ENCODE measurements at regions of chr3 and their contacts with region 1.

Region 1: DNA sequence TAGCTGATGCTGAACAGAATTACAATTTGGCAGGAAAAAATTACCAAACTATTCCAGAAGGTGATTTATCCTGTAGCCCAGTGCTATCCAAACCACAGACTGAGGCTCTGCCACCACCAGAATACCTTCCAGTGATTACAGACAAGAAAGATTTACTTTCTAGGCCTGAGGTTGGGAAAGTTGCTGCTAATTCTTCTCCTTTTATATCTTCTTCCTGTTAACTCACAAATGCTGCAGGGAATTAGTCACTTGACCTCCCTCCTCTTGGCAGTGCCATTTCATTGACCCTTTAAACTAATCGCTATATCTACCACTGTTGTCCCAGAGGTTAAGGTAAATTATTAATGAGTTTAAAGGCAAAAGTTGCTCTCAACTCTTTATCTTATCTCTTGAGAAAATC is 118.4 kb downstream of the CTNNB1 start:
- DNase-seq: peak; percentile 76
- ATAC-seq: peak; percentile 75
- H3K4me3 ChIP-seq: no peak overlapping the region
- H3K27ac ChIP-seq: peak overlapping the region; percentile 1; the same call in 1 of the 2 replicates
- H3K4me1 ChIP-seq: peaks cover 18% of the 10 kb centered on the region
- H3K27me3 ChIP-seq: no peaks in the 10 kb centered on the region
- CTCF ChIP-seq: no peak

Region 2: DNA sequence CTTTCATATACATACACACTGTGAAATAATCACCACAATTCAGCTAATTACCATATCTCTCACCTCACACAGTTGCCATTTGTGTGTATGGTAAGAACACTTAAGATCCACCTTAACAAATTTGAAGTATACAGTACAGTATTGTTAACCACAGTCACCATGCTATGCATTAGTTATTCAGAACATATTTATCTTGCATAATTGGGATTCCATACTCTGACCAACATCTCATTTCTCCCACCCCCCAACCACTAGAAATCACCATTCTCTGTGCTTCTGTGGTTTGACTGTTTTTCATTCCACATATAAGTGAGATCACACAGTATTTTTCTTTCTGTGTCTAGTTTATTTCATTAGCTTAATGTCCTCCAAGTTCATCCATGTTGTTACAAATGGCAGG is 366.1 kb before region 1 on chr3:
- CTCF ChIA-PET with region 1: no interaction called
- POLR2A ChIA-PET with region 1: no interaction called
- intact Hi-C with region 1: no loop called
- DNase-seq: no peak
- ATAC-seq: no peak
- H3K4me3 ChIP-seq: no peak overlapping the region
- H3K27ac ChIP-seq: no peak overlapping the region
- H3K4me1 ChIP-seq: no peaks in the 10 kb centered on the region
- H3K27me3 ChIP-seq: no peaks in the 10 kb centered on the region
- CTCF ChIP-seq: no peak

Region 3: GRCh38 chr3:41247055-41248004 is 70.4 kb before region 1 on chr3:
- CTCF ChIA-PET with region 1: no interaction called
- POLR2A ChIA-PET with region 1: no interaction called
- intact Hi-C with region 1: no loop called
- DNase-seq: no peak
- ATAC-seq: no peak
- H3K4me3 ChIP-seq: no peak overlapping the region
- H3K27ac ChIP-seq: no peak overlapping the region
- H3K4me1 ChIP-seq: no peaks in the 10 kb centered on the region
- H3K27me3 ChIP-seq: no peaks in the 10 kb centered on the region
- CTCF ChIP-seq: no peak

Region 4: DNA sequence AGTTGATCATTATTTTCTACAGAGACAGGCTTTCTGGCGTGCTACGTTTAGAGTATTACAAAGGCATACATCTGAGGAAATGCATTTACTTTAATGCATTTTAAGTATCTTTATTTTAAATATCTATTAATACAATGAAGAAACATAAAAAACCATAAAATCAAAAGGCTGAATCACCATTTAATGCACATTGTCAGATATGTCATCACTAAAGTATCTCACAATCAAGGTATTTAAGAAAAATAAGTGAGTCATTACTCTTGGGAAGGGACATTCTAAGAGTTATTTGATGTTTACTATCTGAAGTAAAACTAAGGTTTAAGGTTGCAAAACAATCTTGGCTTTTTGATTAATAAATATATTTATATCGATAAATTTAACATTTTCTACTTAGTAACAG is 16.2 kb before region 1 on chr3:
- CTCF ChIA-PET with region 1: no interaction called
- POLR2A ChIA-PET with region 1: no interaction called
- intact Hi-C with region 1: loop called (anchors 2 kb)
- DNase-seq: peak; percentile 68
- ATAC-seq: peak; percentile 77
- H3K4me3 ChIP-seq: no peak overlapping the region
- H3K27ac ChIP-seq: no peak overlapping the region
- H3K4me1 ChIP-seq: peaks cover 19% of the 10 kb centered on the region
- H3K27me3 ChIP-seq: no peaks in the 10 kb centered on the region
- CTCF ChIP-seq: no peak

Measured in PC-3 (cell line).